Calu3 (cell line): ENCODE measurements at regions of chrX and their contacts with region 1.

Region 1: DNA sequence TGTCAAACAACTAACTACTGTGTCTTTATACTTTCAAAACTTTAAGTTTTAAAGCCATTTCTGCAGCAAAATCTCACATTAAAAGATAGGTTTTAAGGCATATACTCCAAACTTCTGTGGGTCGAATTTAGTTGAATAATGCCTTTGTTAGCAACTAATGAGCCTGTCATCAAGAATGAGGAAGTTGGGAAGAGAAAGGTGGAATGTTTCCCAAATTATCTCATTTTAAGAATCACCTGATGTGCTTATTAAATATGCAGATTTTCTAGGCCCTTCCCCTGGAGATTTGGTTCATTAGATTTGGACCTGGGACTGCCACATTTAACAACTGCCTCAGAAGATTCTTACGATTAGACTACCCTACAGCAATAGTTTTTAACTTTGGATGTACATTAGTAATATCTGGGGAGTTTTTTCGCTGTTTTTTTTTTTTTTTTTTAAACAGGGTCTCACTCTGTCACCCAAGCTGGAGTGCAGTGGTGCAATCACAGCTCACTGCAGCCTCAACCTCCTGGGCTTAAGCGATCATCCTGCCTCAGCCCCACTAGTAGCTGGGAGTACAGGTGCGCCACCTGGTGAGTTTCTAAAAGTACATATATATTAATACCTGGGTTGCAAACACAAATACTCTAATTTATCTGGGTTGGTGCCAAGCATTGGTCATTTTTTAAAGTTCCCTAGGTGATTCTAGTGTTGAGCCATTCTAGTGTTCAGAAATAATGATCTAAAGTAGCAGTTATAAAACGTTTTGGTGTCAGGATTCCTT is 16.1 kb upstream of the TASL start:
- DNase-seq: peak; percentile 70
- H3K4me3 Mint-ChIP-seq: no peak overlapping the region
- H3K27ac Mint-ChIP-seq: peak overlapping the region; percentile 67
- H3K4me1 Mint-ChIP-seq: peaks cover 14% of the 10 kb centered on the region
- H3K27me3 Mint-ChIP-seq: no peaks in the 10 kb centered on the region
- CTCF ChIP-seq: peak; percentile 32

Region 2: DNA sequence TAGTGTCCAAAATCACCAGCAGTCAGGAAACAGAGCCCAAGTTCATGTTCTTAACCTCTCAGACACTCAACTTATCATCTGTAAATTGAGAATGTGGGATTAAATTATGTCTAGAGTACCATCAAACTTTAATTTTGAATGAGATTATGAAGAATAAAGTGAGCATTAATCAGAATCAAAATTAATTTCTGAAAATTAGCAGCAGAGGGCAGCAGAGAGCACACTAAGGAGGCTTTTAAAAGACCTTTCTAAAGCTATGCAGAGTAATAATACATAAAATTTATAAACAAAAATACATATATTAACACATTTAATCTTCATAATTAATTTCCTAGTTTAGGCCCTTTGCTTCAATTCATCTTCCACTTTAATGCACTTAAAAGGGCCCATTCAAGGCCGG is 23.1 kb before region 1 on chrX:
- CTCF ChIA-PET with region 1: interaction called, 30 read pairs
- intact Hi-C with region 1: loop called (anchors 1 kb)
- DNase-seq: peak; percentile 8
- H3K4me3 Mint-ChIP-seq: no peak overlapping the region
- H3K27ac Mint-ChIP-seq: peak overlapping the region; percentile 47
- H3K4me1 Mint-ChIP-seq: peaks cover 25% of the 10 kb centered on the region
- H3K27me3 Mint-ChIP-seq: no peaks in the 10 kb centered on the region
- CTCF ChIP-seq: peak; percentile 39

Region 3: DNA sequence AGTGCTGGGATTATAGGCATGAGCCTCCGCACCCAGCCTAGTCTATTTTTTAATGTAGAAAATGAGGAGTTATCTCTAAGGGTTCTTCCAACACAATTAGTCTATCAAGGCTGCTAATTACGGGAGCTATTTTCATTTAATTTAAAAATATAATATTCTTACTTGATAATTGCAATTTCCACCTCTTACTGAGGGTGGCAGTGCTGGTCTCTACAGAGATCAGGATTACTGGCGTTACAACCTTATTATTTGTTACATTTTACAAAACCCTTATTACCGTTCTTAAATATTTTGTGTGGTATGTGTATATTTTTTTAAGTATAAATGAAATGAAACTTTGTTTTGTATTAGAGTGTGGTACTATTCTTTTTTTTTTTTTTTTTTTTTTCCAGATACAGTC is 42.0 kb after region 1 on chrX:
- CTCF ChIA-PET with region 1: interaction called, 13 read pairs
- intact Hi-C with region 1: no loop called
- DNase-seq: peak; percentile 12
- H3K4me3 Mint-ChIP-seq: no peak overlapping the region
- H3K27ac Mint-ChIP-seq: no peak overlapping the region
- H3K4me1 Mint-ChIP-seq: no peaks in the 10 kb centered on the region
- H3K27me3 Mint-ChIP-seq: no peaks in the 10 kb centered on the region
- CTCF ChIP-seq: no peak